ENCODE measurements at regions of chr3 and their contacts with region 1.

Region 1: DNA sequence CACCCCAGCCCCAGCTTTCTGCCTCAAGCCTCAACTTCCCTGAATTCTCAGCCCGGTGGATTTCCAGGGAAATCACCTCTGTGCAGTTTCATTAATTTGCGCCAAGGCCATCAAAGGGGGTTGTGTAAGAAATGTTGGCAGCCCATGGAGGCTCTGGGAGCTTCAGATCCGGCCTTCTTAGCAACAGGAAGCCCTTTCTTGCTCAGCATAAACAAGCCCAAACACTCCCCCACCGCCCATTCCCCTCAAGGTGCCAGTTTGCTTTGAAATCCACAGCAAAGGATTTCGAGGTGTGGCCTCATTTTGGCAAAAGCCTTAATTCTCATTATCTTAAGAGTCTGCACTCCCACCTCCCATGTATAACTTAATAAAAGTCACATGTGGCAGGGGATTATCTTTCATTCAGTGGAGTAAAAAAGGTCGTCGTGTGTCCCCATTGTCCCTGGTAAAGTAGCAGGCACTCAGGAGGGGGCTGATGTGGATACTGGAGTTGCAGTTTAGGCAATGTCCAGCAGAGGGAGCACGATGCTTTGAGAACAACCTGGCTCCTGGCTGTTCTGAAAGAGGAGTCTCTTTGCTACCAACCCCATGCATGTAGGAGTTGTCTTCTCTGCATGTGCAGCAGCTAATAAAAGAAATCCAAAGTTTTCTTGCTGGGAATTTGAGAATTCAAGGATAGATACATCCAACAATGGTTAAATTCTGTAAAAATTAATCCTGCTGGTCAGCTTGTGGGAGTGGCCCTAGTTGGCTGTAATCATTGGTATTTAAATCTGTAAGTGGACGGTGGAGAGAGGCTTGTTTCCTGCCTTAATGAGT is 39.5 kb downstream of the EBLN2 start:
- DNase-seq: peak; percentile 78
- H3K4me3 ChIP-seq: no peak overlapping the region
- H3K27ac ChIP-seq: no peak overlapping the region
- H3K4me1 ChIP-seq: no peaks in the 10 kb centered on the region
- H3K27me3 ChIP-seq: no peaks in the 10 kb centered on the region
- CTCF ChIP-seq: peak; percentile 75

Region 2: DNA sequence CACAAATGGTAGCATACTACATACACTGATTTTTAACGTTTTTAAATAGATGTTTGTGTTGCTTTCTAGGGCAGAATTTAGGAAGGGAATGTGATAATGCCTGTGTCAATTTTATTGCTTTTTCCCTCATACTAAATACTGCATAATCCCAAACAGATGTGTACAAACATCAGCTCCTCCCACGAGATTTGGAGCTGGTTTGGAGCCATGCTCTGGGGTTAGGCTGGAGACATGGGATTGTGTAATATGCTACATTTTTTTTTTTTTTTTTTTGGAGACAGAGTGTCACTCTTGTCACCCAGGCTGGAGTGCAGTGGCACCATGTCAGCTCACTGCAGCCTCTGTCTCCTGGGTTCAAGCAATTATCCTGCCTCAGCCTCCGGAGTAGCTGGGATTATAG is 40.6 kb after region 1 on chr3:
- CTCF ChIA-PET with region 1: no interaction called
- POLR2A ChIA-PET with region 1: no interaction called
- intact Hi-C with region 1: no loop called
- DNase-seq: peak; percentile 60
- H3K4me3 ChIP-seq: no peak overlapping the region
- H3K27ac ChIP-seq: no peak overlapping the region
- H3K4me1 ChIP-seq: peaks cover 15% of the 10 kb centered on the region
- H3K27me3 ChIP-seq: no peaks in the 10 kb centered on the region
- CTCF ChIP-seq: no peak

Region 3: GRCh38 chr3:73215281-73215680 is 114.3 kb after region 1 on chr3:
- CTCF ChIA-PET with region 1: no interaction called
- POLR2A ChIA-PET with region 1: no interaction called
- intact Hi-C with region 1: loop called (anchors 10 kb)
- DNase-seq: peak; percentile 67
- H3K4me3 ChIP-seq: no peak overlapping the region
- H3K27ac ChIP-seq: no peak overlapping the region
- H3K4me1 ChIP-seq: peaks cover 27% of the 10 kb centered on the region
- H3K27me3 ChIP-seq: no peaks in the 10 kb centered on the region
- CTCF ChIP-seq: no peak

Region 4: DNA sequence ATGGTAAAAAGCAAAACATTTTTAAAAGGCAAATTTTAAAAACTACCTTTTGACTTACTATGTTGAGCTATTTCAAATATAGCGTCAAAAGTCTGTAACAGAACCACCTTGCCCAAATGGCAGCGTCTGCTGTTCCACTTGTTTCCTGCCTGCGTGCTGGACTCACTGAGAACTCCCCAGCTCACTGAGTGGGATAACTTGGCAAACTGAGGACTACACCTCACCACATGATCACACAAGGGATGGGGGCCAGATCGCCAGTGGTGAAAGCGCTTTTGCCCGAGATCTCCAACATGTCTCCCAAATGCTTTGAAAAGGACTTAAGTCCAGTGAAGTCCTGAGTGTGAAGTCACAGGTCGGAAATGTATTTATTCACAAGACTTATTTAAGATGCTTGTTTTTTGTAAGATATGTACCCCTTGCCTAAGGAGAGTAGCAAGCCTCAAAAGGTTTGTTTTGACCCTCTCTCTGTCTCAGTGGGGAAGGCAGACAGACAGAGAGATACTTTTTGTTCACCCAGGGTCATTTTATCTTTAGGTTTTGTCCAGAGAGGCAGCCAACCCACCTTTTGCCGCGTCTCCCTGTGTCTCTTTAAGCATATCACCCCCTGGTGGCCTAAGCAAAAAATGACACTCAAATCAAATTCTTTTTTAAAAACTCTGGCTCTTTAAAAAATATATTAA is 331.2 kb after region 1 on chr3:
- CTCF ChIA-PET with region 1: interaction called, 4 read pairs
- POLR2A ChIA-PET with region 1: no interaction called
- intact Hi-C with region 1: loop called (anchors 1 kb)
- DNase-seq: peak; percentile 48
- H3K4me3 ChIP-seq: no peak overlapping the region
- H3K27ac ChIP-seq: no peak overlapping the region
- H3K4me1 ChIP-seq: no peaks in the 10 kb centered on the region
- H3K27me3 ChIP-seq: no peaks in the 10 kb centered on the region
- CTCF ChIP-seq: peak; percentile 58

Region 5: DNA sequence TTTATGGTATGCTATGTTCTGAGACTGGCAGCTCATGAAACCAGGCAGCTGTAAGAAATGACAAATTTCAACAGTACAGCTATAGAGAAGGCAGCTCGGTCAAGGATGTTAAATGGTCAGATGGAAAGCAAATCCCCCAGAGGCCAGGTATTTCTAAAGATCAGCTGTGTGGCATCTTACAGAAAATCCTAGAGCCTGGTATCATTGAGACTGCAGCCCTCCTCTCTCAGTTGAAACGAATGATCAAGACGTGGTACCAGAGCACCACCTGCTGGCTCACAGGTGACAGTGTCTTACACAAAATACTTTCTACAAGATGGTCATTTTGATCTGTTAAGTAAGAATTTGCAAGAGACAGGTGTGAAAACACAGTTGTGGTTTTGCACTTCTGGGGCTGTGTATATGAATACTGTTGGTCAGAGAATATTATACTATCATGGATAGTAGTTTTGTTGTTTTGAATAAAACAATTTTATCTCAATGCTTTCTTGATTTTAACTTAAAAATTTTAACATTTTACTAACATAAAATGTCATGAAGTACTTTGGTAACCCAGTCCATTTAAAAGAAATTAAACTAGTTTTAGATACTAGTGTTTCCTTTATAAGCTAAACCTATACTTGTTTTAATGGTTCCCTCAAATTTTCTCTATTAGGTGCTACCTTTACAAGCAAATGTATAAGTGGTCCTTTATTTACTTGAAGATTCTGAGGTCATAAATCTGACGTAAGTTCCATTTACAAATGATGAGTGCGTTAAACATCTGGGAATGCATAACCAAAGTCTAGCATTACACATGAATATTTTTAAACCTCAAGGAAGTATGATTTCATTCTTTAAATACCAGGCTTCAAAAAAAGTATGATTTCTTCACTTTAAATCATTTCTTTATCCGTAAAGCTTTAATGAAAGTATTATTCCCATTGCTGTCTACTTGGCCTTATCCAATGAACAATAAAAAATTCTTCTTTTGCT is 401.9 kb after region 1 on chr3:
- CTCF ChIA-PET with region 1: no interaction called
- POLR2A ChIA-PET with region 1: no interaction called
- intact Hi-C with region 1: loop called (anchors 1 kb)
- DNase-seq: peak; percentile 49
- H3K4me3 ChIP-seq: no peak overlapping the region
- H3K27ac ChIP-seq: no peak overlapping the region
- H3K4me1 ChIP-seq: no peaks in the 10 kb centered on the region
- H3K27me3 ChIP-seq: no peaks in the 10 kb centered on the region
- CTCF ChIP-seq: peak; percentile 68